Dorsolateral prefrontal cortex (tissue), 120 donors: ENCODE measurements at regions of chr18 and their contacts with region 1.

Region 1: DNA sequence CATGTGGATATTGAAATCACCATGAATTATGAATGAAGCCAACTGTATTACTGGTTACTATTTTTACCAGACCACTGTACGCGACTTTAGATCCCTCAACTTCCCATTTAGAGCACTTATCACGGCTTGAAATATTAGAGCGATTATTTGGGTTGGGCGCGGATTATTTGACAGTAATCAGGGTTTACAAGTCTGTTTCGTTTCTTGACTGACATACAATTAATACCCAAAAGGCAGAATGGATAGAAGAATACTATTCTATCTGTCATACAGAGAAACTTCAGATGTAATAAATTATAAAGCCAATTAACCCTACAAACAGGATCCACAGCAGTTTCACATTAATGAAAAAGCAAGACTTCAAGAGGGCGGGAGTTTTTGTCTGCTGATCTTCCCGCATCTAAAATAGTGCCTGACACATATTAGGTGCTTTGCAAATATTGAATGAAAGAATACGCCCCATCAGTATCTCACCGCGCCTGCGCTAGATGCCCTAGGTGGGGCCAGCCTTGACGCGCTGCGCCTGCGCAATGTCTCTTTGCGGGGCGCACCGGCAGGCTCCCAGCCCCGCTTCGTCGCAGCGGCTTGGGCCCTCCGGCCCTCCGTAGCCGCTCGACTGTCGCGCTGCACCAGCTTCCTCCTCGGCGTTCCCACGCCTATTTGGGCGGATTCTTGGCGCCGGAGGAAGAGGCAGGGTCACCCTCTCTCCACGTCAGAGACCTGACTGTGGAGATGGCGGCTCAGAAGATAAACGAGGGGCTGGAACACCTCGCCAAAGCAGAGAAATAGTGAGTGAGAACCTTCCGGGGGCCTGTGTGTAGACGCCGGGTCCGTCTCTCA is at the start of gene NAPG:
- DNase-seq: peak; percentile 76 to 95 (median 86)
- H3K4me3 ChIP-seq: peak within 1 kb of the TSS; percentile 56 to 99 (median 94)
- H3K27ac ChIP-seq: peak within 1 kb of the TSS; percentile 65 to 97 (median 91)
- H3K27me3 ChIP-seq: no peaks in the 10 kb centered on the region
- CTCF ChIP-seq: peak in 29 of 56 donors; percentile 10 to 58 (median 33)
- total RNA-seq, gene NAPG: 52.2 to 139 (median 98.2) TPM

Region 2: GRCh38 chr18:9673296-9674251 is 852.0 kb before region 1 on chr18:
- intact Hi-C with region 1: loop called in 1 of 2 experiments (anchors 10 kb)
- DNase-seq: peak in 2 of 10 donors; percentile 25 to 46
- H3K4me3 ChIP-seq: no peak overlapping the region
- H3K27ac ChIP-seq: peak overlapping the region in 23 of 59 donors; percentile 1 to 61 (median 30)
- H3K27me3 ChIP-seq: no peaks in the 10 kb centered on the region
- CTCF ChIP-seq: peak in 38 of 56 donors; percentile 2 to 64 (median 30)

Region 3: GRCh38 chr18:9824474-9824832 is 701.1 kb before region 1 on chr18:
- intact Hi-C with region 1: no loop called
- DNase-seq: no peak
- H3K4me3 ChIP-seq: no peak overlapping the region
- H3K27ac ChIP-seq: peak overlapping the region in 41 of 59 donors; percentile 1 to 82 (median 53)
- H3K27me3 ChIP-seq: no peaks in the 10 kb centered on the region
- CTCF ChIP-seq: no peak

Region 4: GRCh38 chr18:10242936-10243680 is 282.5 kb before region 1 on chr18:
- intact Hi-C with region 1: loop called in 1 of 2 experiments (anchors 10 kb)
- DNase-seq: no peak
- H3K4me3 ChIP-seq: no peak overlapping the region
- H3K27ac ChIP-seq: peak overlapping the region in 8 of 59 donors; percentile 1 to 69 (median 34)
- H3K27me3 ChIP-seq: no peaks in the 10 kb centered on the region
- CTCF ChIP-seq: no peak